Spleen (tissue), 13 donors: ENCODE measurements at regions of chr1 and their contacts with region 1.

Region 1: DNA sequence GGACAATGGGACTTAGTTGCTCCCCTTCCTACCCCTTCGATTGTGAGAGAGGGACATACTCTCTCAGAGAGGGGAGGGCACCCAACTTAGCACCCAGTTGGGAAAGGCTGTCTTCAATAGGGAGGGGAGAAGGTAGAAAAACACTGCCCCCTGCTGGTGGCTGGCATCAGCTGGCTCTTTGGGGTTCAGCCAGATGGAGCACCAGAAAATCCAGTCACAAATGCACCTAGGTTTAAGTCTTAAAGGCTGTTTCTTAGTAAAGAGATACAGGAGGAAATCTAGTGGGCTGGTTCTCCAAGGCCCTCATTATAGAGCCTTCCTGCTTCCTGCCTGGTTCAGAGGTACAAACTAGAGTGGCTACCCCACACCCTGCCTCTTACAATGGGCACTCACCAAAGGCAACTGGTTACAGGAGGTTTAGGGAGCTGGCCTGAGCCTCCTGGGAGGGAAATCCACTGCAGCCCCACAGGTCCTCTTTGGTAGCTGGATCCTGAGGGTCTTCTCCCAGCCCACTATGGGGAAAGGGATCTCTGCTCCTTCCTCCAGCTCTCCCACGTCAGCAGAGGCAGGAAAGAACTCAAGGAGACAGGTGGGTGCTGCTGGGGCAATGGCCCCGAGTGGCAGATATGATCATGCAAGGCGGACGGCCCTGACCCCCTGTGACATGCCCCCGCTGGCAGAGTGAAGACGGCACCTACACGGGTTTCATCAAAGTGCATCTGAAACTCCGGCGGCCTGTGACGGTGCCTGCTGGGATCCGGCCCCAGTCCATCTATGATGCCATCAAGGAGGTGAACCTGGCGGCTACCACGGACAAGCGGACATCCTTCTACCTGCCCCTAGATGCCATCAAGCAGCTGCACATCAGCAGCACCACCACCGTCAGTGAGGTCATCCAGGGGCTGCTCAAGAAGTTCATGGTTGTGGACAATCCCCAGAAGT is 28.3 kb downstream of the EIF2D start:
- DNase-seq: peak; percentile 91
- H3K4me3 ChIP-seq: peak overlapping the region in 1 of 8 donors; percentile 20
- H3K27ac ChIP-seq: peak overlapping the region; percentile 42 to 98 (median 95)
- H3K4me1 ChIP-seq: peaks cover 51 to 100% (median 79%) of the 10 kb centered on the region in 6 donors
- H3K27me3 ChIP-seq: no peaks in the 10 kb centered on the region
- CTCF ChIP-seq: peak; percentile 86 to 96 (median 92)
- POLR2A ChIP-seq: no peak

Region 2: DNA sequence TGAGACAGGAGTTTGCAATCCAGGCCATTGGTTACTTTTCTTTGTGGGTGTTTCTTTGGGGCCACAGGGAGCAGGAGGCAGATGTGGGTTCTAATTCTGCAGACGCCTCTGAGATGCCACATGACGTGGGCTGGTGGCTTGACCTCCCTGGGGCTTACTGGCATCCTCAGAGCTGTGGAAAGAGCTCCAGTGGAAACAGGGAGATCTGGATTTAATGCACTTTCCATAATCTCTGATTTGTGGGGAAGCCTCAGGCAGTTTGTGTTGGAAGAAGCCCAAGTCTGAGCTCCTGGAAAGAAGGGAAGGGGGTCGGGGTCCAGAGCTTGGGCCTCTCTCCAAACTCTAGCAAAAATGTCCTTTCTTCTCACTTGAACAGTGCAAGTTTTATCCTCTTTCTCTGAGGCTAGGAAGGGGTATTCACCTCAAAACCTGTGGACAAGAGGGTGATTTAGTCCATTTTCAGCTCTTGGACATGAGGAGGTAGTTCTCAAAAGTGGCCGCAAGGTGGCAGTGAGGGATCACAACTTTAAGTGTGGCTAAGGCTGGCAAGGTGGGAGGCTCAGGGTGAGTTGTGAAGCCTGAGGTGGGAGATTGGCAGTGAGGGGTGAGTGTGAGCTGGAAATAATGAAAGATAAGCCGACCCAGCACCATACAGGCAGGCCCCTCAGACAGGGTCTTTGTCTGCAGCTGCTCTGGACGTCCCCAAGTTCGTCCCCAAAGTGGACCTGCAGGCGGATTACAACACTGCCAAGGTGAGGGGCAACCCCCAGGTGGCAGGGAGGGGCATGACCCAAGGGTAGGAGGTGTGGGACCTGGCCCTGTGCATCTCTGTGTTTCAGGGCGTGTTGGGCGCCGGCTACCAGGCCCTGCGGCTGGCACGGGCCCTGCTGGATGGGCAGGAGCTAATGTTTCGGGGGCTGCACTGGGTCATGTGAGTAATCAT is 104.5 kb before region 1 on chr1:
- intact Hi-C with region 1: loop called (anchors 5 kb)
- DNase-seq: no peak
- H3K4me3 ChIP-seq: no peak overlapping the region
- H3K27ac ChIP-seq: no peak overlapping the region
- H3K4me1 ChIP-seq: peaks cover 0 to 26% (median 4%) of the 10 kb centered on the region in 6 donors
- H3K27me3 ChIP-seq: no peaks in the 10 kb centered on the region
- CTCF ChIP-seq: peak; percentile 68 to 90 (median 86)
- POLR2A ChIP-seq: no peak

Region 3: GRCh38 chr1:206547104-206547503 is 36.9 kb before region 1 on chr1:
- intact Hi-C with region 1: loop called (anchors 2 kb)
- DNase-seq: peak; percentile 8
- H3K4me3 ChIP-seq: no peak overlapping the region
- H3K27ac ChIP-seq: no peak overlapping the region
- H3K4me1 ChIP-seq: peaks cover 5 to 44% (median 17%) of the 10 kb centered on the region in 6 donors
- H3K27me3 ChIP-seq: no peaks in the 10 kb centered on the region
- CTCF ChIP-seq: no peak
- POLR2A ChIP-seq: no peak